Dorsolateral prefrontal cortex (tissue), 120 donors: ENCODE measurements at regions of chr9 and their contacts with region 1.

Region 1: GRCh38 chr9:2179567-2179966 is 164.4 kb downstream of the SMARCA2 start:
- DNase-seq: no peak
- H3K4me3 ChIP-seq: peak overlapping the region in 2 of 59 donors; percentile 12 to 31
- H3K27ac ChIP-seq: peak overlapping the region in 30 of 59 donors; percentile 10 to 67 (median 36)
- H3K27me3 ChIP-seq: no peaks in the 10 kb centered on the region
- CTCF ChIP-seq: peak in 3 of 56 donors; percentile 10 to 22 (median 11)

Region 2: DNA sequence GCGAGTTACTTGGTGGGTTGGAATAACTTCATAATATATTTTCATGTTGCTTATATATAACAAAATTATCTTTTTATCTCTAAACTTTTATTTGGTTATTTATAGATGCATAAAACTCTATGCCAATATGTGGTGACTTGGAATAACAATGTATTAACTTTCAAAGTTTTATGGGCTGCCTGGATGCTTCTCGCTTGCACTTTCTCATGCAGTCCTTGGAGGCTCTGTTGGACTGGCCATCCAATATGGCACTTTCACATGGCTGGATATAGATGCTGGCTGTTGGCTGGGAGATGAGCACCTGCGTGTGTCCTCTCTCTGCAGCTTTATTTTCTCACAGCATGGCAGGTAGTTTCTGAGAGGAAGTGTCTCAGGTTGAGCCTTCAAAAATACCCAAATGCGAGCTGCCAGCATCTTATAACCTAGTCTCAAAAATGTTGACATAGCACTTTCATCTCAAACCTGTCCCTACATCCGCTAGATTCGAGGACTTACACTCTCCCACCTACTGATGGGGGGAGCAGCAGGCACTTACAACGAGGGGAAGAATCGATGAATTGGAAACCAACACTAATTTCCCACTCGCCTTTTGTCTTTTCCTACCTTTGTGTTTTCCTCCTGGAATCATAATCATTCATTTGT is 212.7 kb before region 1 on chr9:
- intact Hi-C with region 1: no loop called
- DNase-seq: no peak
- H3K4me3 ChIP-seq: no peak overlapping the region
- H3K27ac ChIP-seq: no peak overlapping the region
- H3K27me3 ChIP-seq: no peaks in the 10 kb centered on the region
- CTCF ChIP-seq: no peak

Region 3: DNA sequence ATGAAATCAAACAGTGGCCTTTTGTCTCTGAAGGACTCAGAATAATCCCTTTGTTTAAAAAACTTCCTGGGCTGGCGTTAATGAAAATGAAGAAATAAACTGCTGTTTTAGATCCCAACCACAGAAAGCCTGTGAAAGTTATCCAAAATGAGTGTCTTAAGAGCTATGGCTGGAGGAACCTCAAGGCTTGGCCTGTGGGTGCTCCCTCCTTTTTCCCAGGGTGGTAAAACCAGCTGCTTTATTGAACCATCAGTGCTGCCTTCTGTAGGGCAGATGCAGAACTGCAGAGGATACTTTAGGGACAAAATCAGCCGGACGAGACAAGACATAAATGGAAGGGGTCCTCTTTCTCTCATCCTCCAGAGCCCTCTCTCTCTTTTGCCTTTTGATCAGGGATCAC is 63.5 kb before region 1 on chr9:
- intact Hi-C with region 1: loop called (anchors 5 to 10 kb)
- DNase-seq: no peak
- H3K4me3 ChIP-seq: no peak overlapping the region
- H3K27ac ChIP-seq: peak overlapping the region in 15 of 59 donors; percentile 0 to 35 (median 19)
- H3K27me3 ChIP-seq: no peaks in the 10 kb centered on the region
- CTCF ChIP-seq: peak in 51 of 56 donors; percentile 12 to 59 (median 42)